ENCODE measurements at regions of chr1 and their contacts with region 1.

Region 1: GRCh38 chr1:39098546-39099250 is 72.5 kb downstream of the NDUFS5 start:
- DNase-seq: peak in 1 of 2 donors; percentile 87
- ATAC-seq: peak; percentile 76 to 88 (median 83)
- H3K4me3 ChIP-seq: no peak overlapping the region
- H3K4me3 Mint-ChIP-seq: no peak overlapping the region
- H3K27ac ChIP-seq: no peak overlapping the region
- H3K27ac Mint-ChIP-seq: no peak overlapping the region
- H3K4me1 ChIP-seq: peaks cover 6% of the 10 kb centered on the region
- H3K4me1 Mint-ChIP-seq: peaks cover 10 to 15% of the 10 kb centered on the region in 2 donors
- H3K27me3 ChIP-seq: no peaks in the 10 kb centered on the region
- H3K27me3 Mint-ChIP-seq: peaks cover 0 to 10% of the 10 kb centered on the region in 2 donors
- CTCF ChIP-seq: peak; percentile 51

Region 2: DNA sequence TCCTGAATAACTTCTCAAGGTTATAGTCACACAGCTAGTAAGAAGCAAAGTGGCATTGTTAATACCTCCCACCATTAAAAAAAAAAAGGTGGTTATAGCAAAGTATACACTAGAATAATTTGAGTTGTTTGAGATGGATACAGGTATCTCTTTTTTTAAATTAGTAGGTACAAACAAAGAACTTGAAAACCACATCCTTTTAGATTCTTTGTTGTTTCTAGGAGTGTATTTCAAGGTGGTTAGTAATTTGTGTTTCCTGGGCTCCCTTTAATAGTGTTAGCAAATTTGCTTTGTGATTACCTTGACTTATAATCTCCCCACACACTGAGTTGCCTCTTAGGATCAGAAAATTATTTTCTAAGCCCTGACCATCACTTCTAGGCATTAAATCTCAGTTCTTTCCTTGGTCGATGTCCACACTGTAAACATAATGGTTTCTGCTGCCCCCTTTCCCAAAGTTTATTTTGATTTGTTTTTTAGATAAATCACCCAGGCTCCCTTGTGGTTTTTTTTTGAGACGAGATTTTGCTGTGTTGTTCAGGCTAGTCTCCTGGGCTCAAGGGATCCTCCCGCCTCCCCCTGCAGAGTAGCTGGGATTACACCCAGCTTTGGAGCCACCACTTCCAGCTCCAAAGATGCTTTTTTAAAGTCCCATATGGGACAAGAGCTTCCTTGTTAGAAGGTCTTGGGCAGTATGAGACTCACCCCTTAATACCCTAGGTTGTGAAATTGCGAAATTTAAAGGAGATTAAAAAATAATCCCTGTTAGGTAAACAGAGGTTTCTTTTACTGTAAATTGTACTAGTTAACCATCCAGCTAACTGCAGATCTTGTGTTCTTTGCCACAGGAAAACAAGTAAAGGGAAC is 101.4 kb before region 1 on chr1:
- intact Hi-C with region 1: no loop called
- DNase-seq: peak in 1 of 2 donors; percentile 48
- ATAC-seq: peak in 1 of 3 donors; percentile 20
- H3K4me3 ChIP-seq: no peak overlapping the region
- H3K4me3 Mint-ChIP-seq: peak overlapping the region; percentile 55
- H3K27ac ChIP-seq: no peak overlapping the region
- H3K27ac Mint-ChIP-seq: peak overlapping the region; percentile 65 to 79
- H3K4me1 ChIP-seq: peaks cover 26% of the 10 kb centered on the region
- H3K4me1 Mint-ChIP-seq: peaks cover 46 to 50% of the 10 kb centered on the region in 2 donors
- H3K27me3 ChIP-seq: no peaks in the 10 kb centered on the region
- H3K27me3 Mint-ChIP-seq: no peaks in the 10 kb centered on the region
- CTCF ChIP-seq: no peak

Region 3: DNA sequence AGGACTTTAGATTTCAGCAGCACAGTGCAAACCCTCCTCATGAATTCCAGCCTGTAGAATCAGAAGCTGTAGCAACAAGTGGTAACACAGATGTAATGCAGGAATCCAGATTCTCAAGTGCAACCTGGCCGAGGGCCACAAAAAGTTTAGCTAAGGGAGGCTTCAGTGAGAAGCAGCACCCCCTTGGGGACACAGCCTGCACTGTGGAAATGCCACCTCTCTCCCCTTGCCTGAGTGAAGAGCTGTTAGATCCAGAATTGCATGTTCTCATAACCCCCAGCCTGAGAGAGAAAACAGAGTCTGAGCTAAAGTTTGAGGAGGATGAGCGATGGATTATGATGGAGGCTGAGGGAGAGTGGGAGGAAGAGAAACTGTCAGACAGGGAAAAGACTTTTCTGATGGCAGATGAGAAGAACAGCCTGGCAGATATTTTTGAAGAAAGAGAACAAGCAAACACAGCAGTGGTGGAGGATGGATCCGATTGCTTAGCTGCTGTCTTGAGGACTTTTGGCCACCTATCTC is 312.3 kb after region 1 on chr1:
- intact Hi-C with region 1: loop called (anchors 10 kb)
- DNase-seq: peak in 1 of 2 donors; percentile 81
- ATAC-seq: peak in 1 of 3 donors; percentile 39
- H3K4me3 ChIP-seq: no peak overlapping the region
- H3K4me3 Mint-ChIP-seq: no peak overlapping the region
- H3K27ac ChIP-seq: no peak overlapping the region
- H3K27ac Mint-ChIP-seq: peak overlapping the region; percentile 25 to 61
- H3K4me1 ChIP-seq: peaks cover 11% of the 10 kb centered on the region
- H3K4me1 Mint-ChIP-seq: peaks cover 63 to 66% of the 10 kb centered on the region in 2 donors
- H3K27me3 ChIP-seq: no peaks in the 10 kb centered on the region
- H3K27me3 Mint-ChIP-seq: no peaks in the 10 kb centered on the region
- CTCF ChIP-seq: peak; percentile 35

Region 4: GRCh38 chr1:39538588-39539465 is 440.1 kb after region 1 on chr1:
- intact Hi-C with region 1: loop called (anchors 1 kb)
- DNase-seq: peak in 1 of 2 donors; percentile 72
- ATAC-seq: peak; percentile 85 to 95 (median 93)
- H3K4me3 ChIP-seq: no peak overlapping the region
- H3K4me3 Mint-ChIP-seq: no peak overlapping the region
- H3K27ac ChIP-seq: no peak overlapping the region
- H3K27ac Mint-ChIP-seq: no peak overlapping the region
- H3K4me1 ChIP-seq: peaks cover 12% of the 10 kb centered on the region
- H3K4me1 Mint-ChIP-seq: peaks cover 0 to 8% of the 10 kb centered on the region in 2 donors
- H3K27me3 ChIP-seq: no peaks in the 10 kb centered on the region
- H3K27me3 Mint-ChIP-seq: no peaks in the 10 kb centered on the region
- CTCF ChIP-seq: peak; percentile 88